Activated naive CD4-positive, alpha-beta T cell treated with anti-CD3 and anti-CD28 coated beads for 36 hours (primary cell): ENCODE measurements at regions of chr11 and their contacts with region 1.

Region 1: DNA sequence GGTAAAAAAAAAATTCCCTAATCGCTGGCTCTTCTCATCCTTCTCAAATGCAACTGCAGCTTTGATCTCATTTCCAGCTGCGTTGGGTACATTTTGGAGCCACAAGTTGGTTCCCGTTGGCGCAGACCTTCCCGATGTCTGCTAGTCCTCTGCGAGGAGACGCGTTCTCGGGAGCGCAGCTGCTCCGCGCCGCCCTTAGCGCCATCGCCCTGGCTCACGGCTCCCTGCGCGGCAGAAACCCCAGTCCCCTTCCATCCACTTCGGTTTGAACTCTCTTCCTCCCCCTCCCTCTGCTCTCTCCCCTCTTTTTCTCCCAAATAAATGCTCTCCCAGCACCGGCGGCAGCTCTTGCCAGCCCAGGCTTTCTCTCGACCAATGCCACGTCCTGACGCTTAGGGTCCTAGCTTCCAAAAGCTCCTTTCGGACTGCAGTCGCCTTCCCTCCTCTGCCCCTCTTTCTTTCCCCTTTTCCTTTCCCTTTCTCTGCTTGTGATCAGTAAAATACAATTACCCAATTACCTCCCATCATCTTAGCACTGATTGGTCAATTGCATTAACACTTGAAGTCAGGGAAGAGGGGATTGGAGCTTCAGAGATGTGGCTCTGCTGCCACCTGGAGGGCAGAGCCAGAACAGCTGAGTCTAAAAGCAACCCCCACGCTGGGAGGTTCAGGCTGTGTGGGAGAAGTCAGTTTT is 1165.7 kb downstream of the LRRC4C start:
- DNase-seq: peak; percentile 51
- H3K4me3 Mint-ChIP-seq: peak overlapping the region; percentile 43
- H3K27ac Mint-ChIP-seq: no peak overlapping the region
- H3K4me1 Mint-ChIP-seq: peaks cover 10% of the 10 kb centered on the region
- H3K27me3 Mint-ChIP-seq: peaks cover 27% of the 10 kb centered on the region

Region 2: GRCh38 chr11:39365809-39366436 is 927.9 kb before region 1 on chr11:
- CTCF ChIA-PET with region 1: no interaction called
- intact Hi-C with region 1: loop called (anchors 10 kb)
- DNase-seq: no peak
- H3K4me3 Mint-ChIP-seq: no peak overlapping the region
- H3K27ac Mint-ChIP-seq: no peak overlapping the region
- H3K4me1 Mint-ChIP-seq: peaks cover 31% of the 10 kb centered on the region
- H3K27me3 Mint-ChIP-seq: no peaks in the 10 kb centered on the region